Activated CD4-positive, alpha-beta T cell treated with anti-CD3 and anti-CD28 coated beads for 36 hours (primary cell): ENCODE measurements at regions of chr10 and their contacts with region 1.

Region 1: DNA sequence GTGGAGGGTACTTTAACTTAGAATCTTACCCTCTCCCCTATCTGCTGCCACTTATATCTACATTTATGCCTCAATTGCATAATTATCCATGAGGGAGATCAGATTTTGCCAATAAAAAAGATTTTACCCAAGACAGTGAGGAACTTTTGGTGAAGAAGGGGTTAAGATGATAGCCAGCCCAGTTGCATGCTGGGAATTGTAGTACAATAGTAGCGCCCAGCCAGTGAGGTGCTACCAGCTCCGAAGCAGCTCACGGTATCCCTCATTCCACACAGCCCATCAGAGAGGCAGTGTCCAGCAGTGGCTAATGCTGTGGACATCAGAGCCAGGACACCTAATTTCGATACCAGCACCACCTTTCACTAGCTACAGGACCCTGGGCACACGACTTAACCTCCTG is 5.9 kb upstream of the LGI1 start:
- DNase-seq: peak; percentile 13
- ATAC-seq: peak; percentile 44
- H3K4me3 Mint-ChIP-seq: no peak overlapping the region
- H3K27ac Mint-ChIP-seq: no peak overlapping the region
- H3K4me1 Mint-ChIP-seq: peaks cover 5% of the 10 kb centered on the region
- H3K27me3 Mint-ChIP-seq: peaks cover 6% of the 10 kb centered on the region

Region 2: DNA sequence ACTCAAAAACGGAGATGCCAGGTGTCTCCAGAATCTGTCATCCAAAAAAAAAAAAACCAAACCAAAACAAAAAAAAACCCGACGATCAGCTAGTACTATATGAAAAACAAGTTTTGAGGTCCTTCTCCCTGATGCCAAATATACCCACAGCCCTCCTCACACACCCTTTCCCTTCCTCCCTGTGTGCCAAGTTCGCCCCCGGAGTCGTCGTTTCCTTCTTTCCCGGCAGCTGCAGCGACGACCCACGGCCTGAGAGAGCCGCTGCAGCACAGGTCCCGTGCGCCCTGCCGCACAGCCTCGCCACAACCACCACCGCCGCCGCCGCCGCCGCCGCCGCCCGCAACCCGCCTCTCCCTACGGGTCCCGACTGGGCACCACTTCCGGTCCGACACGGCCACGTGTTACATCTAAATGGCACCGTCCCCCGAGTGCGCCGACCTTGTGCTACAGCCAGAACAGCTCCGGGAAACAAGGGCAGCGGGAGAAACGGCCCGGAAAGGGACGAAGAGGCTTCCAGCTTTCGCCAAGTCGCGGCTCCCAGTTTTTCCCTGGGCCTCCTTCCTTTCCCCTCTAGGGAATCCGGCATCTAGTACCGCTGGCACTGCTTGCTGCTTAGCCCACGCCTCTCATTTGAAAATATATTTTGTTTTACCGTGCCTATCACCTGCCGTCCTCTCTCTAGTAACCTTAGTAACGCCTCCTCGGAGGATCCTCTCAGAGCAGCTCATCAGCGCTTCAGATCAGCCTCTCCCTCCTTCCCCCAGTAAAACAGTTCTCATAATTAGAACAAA is 49.4 kb before region 1 on chr10 and contains the start of gene FRA10AC1:
- CTCF ChIA-PET with region 1: no interaction called
- POLR2A ChIA-PET with region 1: no interaction called
- intact Hi-C with region 1: loop called in 1 of 2 experiments (anchors 1 kb)
- DNase-seq: peak; percentile 93
- ATAC-seq: peak; percentile 84
- H3K4me3 Mint-ChIP-seq: no peak within 1 kb of the TSS
- H3K27ac Mint-ChIP-seq: no peak within 1 kb of the TSS
- H3K4me1 Mint-ChIP-seq: peaks cover 29% of the 10 kb centered on the region
- H3K27me3 Mint-ChIP-seq: no peaks in the 10 kb centered on the region
- total RNA-seq, gene FRA10AC1: 18.9 to 29.4 TPM